ENCODE measurements at regions of chr1 and their contacts with region 1.

Region 1: GRCh38 chr1:28886731-28887418 is 27.5 kb upstream of the EPB41 start:
- DNase-seq: peak; percentile 83 to 94 (median 87)
- ATAC-seq: peak; percentile 76 to 85 (median 82)
- H3K4me3 ChIP-seq: peak overlapping the region; percentile 60 to 94 (median 87)
- H3K27ac ChIP-seq: peak overlapping the region; percentile 53 to 90 (median 84)
- H3K4me1 ChIP-seq: peaks cover 0 to 55% (median 16%) of the 10 kb centered on the region in 12 donors
- H3K27me3 ChIP-seq: peaks cover 0 to 10% (median 0%) of the 10 kb centered on the region in 9 donors
- CTCF ChIP-seq: no peak
- POLR2A ChIP-seq: peak; percentile 54 to 70

Region 2: GRCh38 chr1:28914228-28915030 is 27.6 kb after region 1 on chr1 and contains the start of gene EPB41:
- intact Hi-C with region 1: no loop called
- DNase-seq: peak; percentile 88 to 95 (median 90)
- ATAC-seq: peak; percentile 93 to 99 (median 98)
- H3K4me3 ChIP-seq: peak within 1 kb of the TSS; percentile 44 to 91 (median 64)
- H3K27ac ChIP-seq: peak within 1 kb of the TSS in 5 of 12 donors; percentile 6 to 55 (median 45)
- H3K4me1 ChIP-seq: peaks cover 0 to 21% (median 10%) of the 10 kb centered on the region in 12 donors
- H3K27me3 ChIP-seq: no peaks in the 10 kb centered on the region
- CTCF ChIP-seq: no peak
- POLR2A ChIP-seq: no peak
- total RNA-seq, gene EPB41: 13.6 to 34.4 (median 24.2) TPM

Region 3: GRCh38 chr1:28983509-28984310 is 96.8 kb after region 1 on chr1:
- intact Hi-C with region 1: loop called in 4 of 10 experiments (anchors 2 to 5 kb)
- DNase-seq: peak in 4 of 5 donors; percentile 40 to 78 (median 63)
- ATAC-seq: peak; percentile 82 to 94 (median 85)
- H3K4me3 ChIP-seq: no peak overlapping the region
- H3K27ac ChIP-seq: peak overlapping the region in 10 of 12 donors; percentile 15 to 85 (median 66)
- H3K4me1 ChIP-seq: peaks cover 0 to 34% (median 9%) of the 10 kb centered on the region in 12 donors
- H3K27me3 ChIP-seq: no peaks in the 10 kb centered on the region
- CTCF ChIP-seq: peak in 7 of 12 donors; percentile 16 to 42 (median 24)
- POLR2A ChIP-seq: no peak

Region 4: DNA sequence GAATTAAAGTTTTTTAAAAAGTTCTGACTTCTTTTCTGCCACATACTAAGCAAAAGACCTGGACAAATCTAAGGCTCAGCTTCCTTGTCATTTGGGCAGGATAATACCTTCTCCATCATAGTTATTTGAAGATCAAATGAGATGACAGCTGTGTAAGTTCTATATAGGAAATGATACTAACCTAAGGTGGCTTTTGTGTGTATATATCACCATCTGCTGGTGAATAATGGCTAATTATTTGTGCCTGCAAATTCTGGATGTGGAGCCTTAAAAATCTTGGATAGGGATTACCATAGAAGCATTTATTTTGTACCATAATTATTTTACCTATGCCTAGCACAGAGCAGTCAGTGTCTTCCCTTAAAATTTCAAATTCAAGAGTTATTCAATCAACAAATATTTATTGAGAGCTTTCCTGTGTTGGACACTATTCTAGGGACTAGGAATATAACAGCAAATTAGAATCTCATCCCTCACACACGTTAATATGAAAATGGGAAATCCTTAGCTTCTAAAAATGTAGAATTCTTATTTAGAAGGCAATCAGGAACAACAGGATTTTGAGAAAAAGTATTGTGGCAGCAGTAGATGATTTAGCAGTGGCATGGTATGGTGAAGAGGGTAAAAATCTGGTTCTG is 147.1 kb after region 1 on chr1:
- intact Hi-C with region 1: loop called (anchors 1 to 2 kb)
- DNase-seq: no peak
- ATAC-seq: peak in 2 of 4 donors; percentile 46 to 55
- H3K4me3 ChIP-seq: no peak overlapping the region
- H3K27ac ChIP-seq: no peak overlapping the region
- H3K4me1 ChIP-seq: peaks cover 0 to 6% (median 0%) of the 10 kb centered on the region in 12 donors
- H3K27me3 ChIP-seq: no peaks in the 10 kb centered on the region
- CTCF ChIP-seq: peak; percentile 49 to 78 (median 66)
- POLR2A ChIP-seq: no peak

Region 5: GRCh38 chr1:29124366-29125236 is 237.7 kb after region 1 on chr1:
- intact Hi-C with region 1: loop called in 2 of 10 experiments (anchors 5 to 10 kb)
- DNase-seq: peak; percentile 82 to 90 (median 87)
- ATAC-seq: peak; percentile 58 to 81 (median 78)
- H3K4me3 ChIP-seq: peak overlapping the region; percentile 56 to 90 (median 77)
- H3K27ac ChIP-seq: peak overlapping the region; percentile 84 to 99 (median 94)
- H3K4me1 ChIP-seq: peaks cover 0 to 40% (median 18%) of the 10 kb centered on the region in 12 donors
- H3K27me3 ChIP-seq: peaks cover 0 to 57% (median 18%) of the 10 kb centered on the region in 9 donors
- CTCF ChIP-seq: peak; percentile 24 to 77 (median 70)
- POLR2A ChIP-seq: peak in 1 of 2 donors; percentile 42

Region 6: GRCh38 chr1:29181413-29182225 is 294.7 kb after region 1 on chr1 and contains the start of gene SRSF4:
- intact Hi-C with region 1: loop called in 1 of 10 experiments (anchors 5 kb)
- DNase-seq: peak; percentile 99 to 100 (median 99)
- ATAC-seq: peak; percentile 92 to 97 (median 96)
- H3K4me3 ChIP-seq: peak within 1 kb of the TSS; percentile 74 to 100 (median 98)
- H3K27ac ChIP-seq: peak within 1 kb of the TSS; percentile 85 to 100 (median 100)
- H3K4me1 ChIP-seq: peaks cover 11 to 51% (median 45%) of the 10 kb centered on the region in 12 donors
- H3K27me3 ChIP-seq: no peaks in the 10 kb centered on the region
- CTCF ChIP-seq: peak; percentile 57 to 96 (median 84)
- POLR2A ChIP-seq: peak in 1 of 2 donors; percentile 87
- total RNA-seq, gene SRSF4: 40.4 to 54.6 (median 49.0) TPM

Measured in heart left ventricle (tissue), 16 donors.